ENCODE measurements at regions of chr10 and their contacts with region 1.

Region 1: DNA sequence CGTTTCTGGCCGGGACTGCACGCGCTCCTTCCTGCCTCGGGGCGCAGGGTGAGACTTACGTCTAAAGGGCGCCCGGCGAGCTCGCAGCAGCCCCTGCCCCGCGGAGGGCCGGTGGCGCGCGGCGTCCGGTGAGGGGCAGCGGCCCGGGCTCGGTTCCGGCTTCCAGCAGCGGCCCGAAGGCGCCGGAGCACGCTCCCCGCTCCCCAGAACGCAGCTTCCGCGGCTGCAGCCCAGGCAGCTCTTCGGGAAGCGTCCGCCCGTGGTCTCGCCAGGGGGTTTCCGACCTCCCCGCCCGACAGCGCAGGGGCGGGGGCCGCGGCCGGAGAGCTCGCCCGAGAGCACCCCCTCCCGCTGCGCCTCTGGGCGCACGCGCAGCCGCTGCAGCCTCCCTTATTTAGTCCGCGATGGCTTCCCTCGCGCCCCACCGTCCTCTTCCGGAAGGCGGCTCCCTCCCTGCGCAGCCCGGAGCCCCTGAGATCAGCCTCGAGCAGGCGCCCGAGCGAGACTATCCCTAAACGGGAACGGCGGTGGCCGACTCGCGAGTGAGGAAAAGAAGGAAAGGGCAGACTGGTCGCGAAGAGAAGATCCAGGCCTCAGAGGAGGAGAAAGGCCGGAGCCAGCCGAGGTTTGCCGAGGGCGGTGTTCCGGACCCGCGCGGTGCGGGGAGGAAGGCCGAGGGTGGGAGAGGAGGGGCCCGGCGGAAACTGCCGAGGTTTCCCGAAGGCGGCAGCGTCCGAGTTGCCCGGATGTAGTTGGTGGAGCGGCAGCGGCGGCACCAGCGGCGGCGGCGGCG is at the start of gene WAC:
- DNase-seq: peak; percentile 99
- ATAC-seq: peak; percentile 79
- H3K4me3 ChIP-seq: peak within 1 kb of the TSS; percentile 68 to 90 (median 83)
- H3K4me3 Mint-ChIP-seq: peak within 1 kb of the TSS; percentile 99
- H3K27ac ChIP-seq: peak within 1 kb of the TSS; percentile 100
- H3K27ac Mint-ChIP-seq: peak within 1 kb of the TSS; percentile 100
- H3K4me1 ChIP-seq: peaks cover 19 to 40% of the 10 kb centered on the region in 2 donors
- H3K4me1 Mint-ChIP-seq: peaks cover 65% of the 10 kb centered on the region
- H3K27me3 ChIP-seq: no peaks in the 10 kb centered on the region
- H3K27me3 Mint-ChIP-seq: no peaks in the 10 kb centered on the region
- CTCF ChIP-seq: no peak
- total RNA-seq, gene WAC: 196 and 197 TPM in 2 replicates

Region 2: GRCh38 chr10:27504007-27504807 is 1028.4 kb before region 1 on chr10 and contains the start of gene RAB18:
- CTCF ChIA-PET with region 1: no interaction called
- POLR2A ChIA-PET with region 1: interaction called, 3 read pairs
- intact Hi-C with region 1: loop called (anchors 2 kb)
- DNase-seq: peak; percentile 98
- ATAC-seq: peak; percentile 95
- H3K4me3 ChIP-seq: peak within 1 kb of the TSS; percentile 68 to 91 (median 86)
- H3K4me3 Mint-ChIP-seq: peak within 1 kb of the TSS; percentile 100
- H3K27ac ChIP-seq: peak within 1 kb of the TSS; percentile 87 to 88
- H3K27ac Mint-ChIP-seq: peak within 1 kb of the TSS; percentile 100
- H3K4me1 ChIP-seq: peaks cover 13 to 18% of the 10 kb centered on the region in 2 donors
- H3K4me1 Mint-ChIP-seq: peaks cover 41% of the 10 kb centered on the region
- H3K27me3 ChIP-seq: peaks cover 0 to 15% (median 2%) of the 10 kb centered on the region in 4 experiments
- H3K27me3 Mint-ChIP-seq: peaks cover 4% of the 10 kb centered on the region
- CTCF ChIP-seq: no peak
- total RNA-seq, gene RAB18: 56.5 and 60.5 TPM in 2 replicates

Region 3: GRCh38 chr10:28334296-28334695 is 198.3 kb before region 1 on chr10:
- CTCF ChIA-PET with region 1: no interaction called
- POLR2A ChIA-PET with region 1: interaction called, 7 read pairs
- intact Hi-C with region 1: loop called (anchors 10 kb)
- DNase-seq: peak; percentile 90
- ATAC-seq: peak; percentile 69
- H3K4me3 ChIP-seq: peak overlapping the region in 4 of 5 experiments; percentile 4 to 40 (median 24)
- H3K4me3 Mint-ChIP-seq: peak overlapping the region; percentile 89
- H3K27ac ChIP-seq: peak overlapping the region; percentile 74 to 97
- H3K27ac Mint-ChIP-seq: peak overlapping the region; percentile 97
- H3K4me1 ChIP-seq: peaks cover 26 to 33% of the 10 kb centered on the region in 2 donors
- H3K4me1 Mint-ChIP-seq: peaks cover 35% of the 10 kb centered on the region
- H3K27me3 ChIP-seq: no peaks in the 10 kb centered on the region
- H3K27me3 Mint-ChIP-seq: peaks cover 4% of the 10 kb centered on the region
- CTCF ChIP-seq: no peak

Region 4: GRCh38 chr10:28367929-28368484 is 164.6 kb before region 1 on chr10:
- CTCF ChIA-PET with region 1: no interaction called
- POLR2A ChIA-PET with region 1: no interaction called
- intact Hi-C with region 1: loop called (anchors 1 kb)
- DNase-seq: peak; percentile 85
- ATAC-seq: peak; percentile 98
- H3K4me3 ChIP-seq: peak overlapping the region in 1 of 5 experiments; percentile 9
- H3K4me3 Mint-ChIP-seq: peak overlapping the region; percentile 66
- H3K27ac ChIP-seq: peak overlapping the region; percentile 78 to 84
- H3K27ac Mint-ChIP-seq: peak overlapping the region; percentile 90
- H3K4me1 ChIP-seq: peaks cover 38 to 46% of the 10 kb centered on the region in 2 donors
- H3K4me1 Mint-ChIP-seq: peaks cover 33% of the 10 kb centered on the region
- H3K27me3 ChIP-seq: no peaks in the 10 kb centered on the region
- H3K27me3 Mint-ChIP-seq: no peaks in the 10 kb centered on the region
- CTCF ChIP-seq: no peak

Region 5: GRCh38 chr10:28432210-28432676 is 100.3 kb before region 1 on chr10:
- CTCF ChIA-PET with region 1: interaction called, 5 read pairs
- POLR2A ChIA-PET with region 1: no interaction called
- intact Hi-C with region 1: loop called (anchors 1 kb)
- DNase-seq: peak; percentile 63
- ATAC-seq: peak; percentile 62
- H3K4me3 ChIP-seq: peak overlapping the region in 3 of 5 experiments; percentile 12 to 52 (median 33)
- H3K4me3 Mint-ChIP-seq: peak overlapping the region; percentile 62
- H3K27ac ChIP-seq: no peak overlapping the region
- H3K27ac Mint-ChIP-seq: no peak overlapping the region
- H3K4me1 ChIP-seq: peaks cover 4 to 6% of the 10 kb centered on the region in 2 donors
- H3K4me1 Mint-ChIP-seq: peaks cover 6% of the 10 kb centered on the region
- H3K27me3 ChIP-seq: no peaks in the 10 kb centered on the region
- H3K27me3 Mint-ChIP-seq: peaks cover 3% of the 10 kb centered on the region
- CTCF ChIP-seq: peak; percentile 87

Region 6: GRCh38 chr10:28604567-28605536 is 72.3 kb after region 1 on chr10:
- CTCF ChIA-PET with region 1: no interaction called
- POLR2A ChIA-PET with region 1: no interaction called
- intact Hi-C with region 1: no loop called
- DNase-seq: no peak
- ATAC-seq: no peak
- H3K4me3 ChIP-seq: no peak overlapping the region
- H3K4me3 Mint-ChIP-seq: no peak overlapping the region
- H3K27ac ChIP-seq: no peak overlapping the region
- H3K27ac Mint-ChIP-seq: no peak overlapping the region
- H3K4me1 ChIP-seq: peaks cover 0 to 3% of the 10 kb centered on the region in 2 donors
- H3K4me1 Mint-ChIP-seq: peaks cover 23% of the 10 kb centered on the region
- H3K27me3 ChIP-seq: no peaks in the 10 kb centered on the region
- H3K27me3 Mint-ChIP-seq: no peaks in the 10 kb centered on the region
- CTCF ChIP-seq: no peak

Region 7: GRCh38 chr10:28676968-28677887 is 144.6 kb after region 1 on chr10 and contains the start of gene BAMBI:
- CTCF ChIA-PET with region 1: no interaction called
- POLR2A ChIA-PET with region 1: no interaction called
- intact Hi-C with region 1: loop called (anchors 2 kb)
- DNase-seq: peak; percentile 92
- ATAC-seq: peak; percentile 96
- H3K4me3 ChIP-seq: peak within 1 kb of the TSS; percentile 38 to 68 (median 58)
- H3K4me3 Mint-ChIP-seq: peak within 1 kb of the TSS; percentile 91
- H3K27ac ChIP-seq: no peak within 1 kb of the TSS
- H3K27ac Mint-ChIP-seq: peak within 1 kb of the TSS; percentile 68
- H3K4me1 ChIP-seq: peaks cover 37 to 39% of the 10 kb centered on the region in 2 donors
- H3K4me1 Mint-ChIP-seq: peaks cover 35% of the 10 kb centered on the region
- H3K27me3 ChIP-seq: peaks cover 3 to 74% (median 49%) of the 10 kb centered on the region in 4 experiments
- H3K27me3 Mint-ChIP-seq: peaks cover 75% of the 10 kb centered on the region
- CTCF ChIP-seq: peak; percentile 71
- total RNA-seq, gene BAMBI: 0.22 and 0.84 TPM in 2 replicates